Activated naive CD4-positive, alpha-beta T cell treated with anti-CD3 and anti-CD28 coated beads for 36 hours (primary cell): ENCODE measurements at regions of chr11 and their contacts with region 1.

Region 1: GRCh38 chr11:3920148-3920852 is 64.8 kb downstream of the STIM1 start:
- DNase-seq: peak; percentile 93
- H3K4me3 Mint-ChIP-seq: no peak overlapping the region
- H3K27ac Mint-ChIP-seq: peak overlapping the region; percentile 74
- H3K4me1 Mint-ChIP-seq: peaks cover 61% of the 10 kb centered on the region
- H3K27me3 Mint-ChIP-seq: no peaks in the 10 kb centered on the region

Region 2: GRCh38 chr11:3959015-3959919 is 39.0 kb after region 1 on chr11:
- CTCF ChIA-PET with region 1: no interaction called
- intact Hi-C with region 1: loop called (anchors 1 kb)
- DNase-seq: no peak
- H3K4me3 Mint-ChIP-seq: no peak overlapping the region
- H3K27ac Mint-ChIP-seq: no peak overlapping the region
- H3K4me1 Mint-ChIP-seq: peaks cover 79% of the 10 kb centered on the region
- H3K27me3 Mint-ChIP-seq: no peaks in the 10 kb centered on the region

Region 3: GRCh38 chr11:3989921-3990290 is 69.6 kb after region 1 on chr11:
- CTCF ChIA-PET with region 1: interaction called, 4 read pairs
- intact Hi-C with region 1: loop called (anchors 2 kb)
- DNase-seq: peak; percentile 38
- H3K4me3 Mint-ChIP-seq: peak overlapping the region; percentile 49
- H3K27ac Mint-ChIP-seq: peak overlapping the region; percentile 63
- H3K4me1 Mint-ChIP-seq: peaks cover 64% of the 10 kb centered on the region
- H3K27me3 Mint-ChIP-seq: no peaks in the 10 kb centered on the region